Caco-2 (cell line): ENCODE measurements at regions of chr19 and their contacts with region 1.

Region 1: GRCh38 chr19:14031719-14032480 is at the start of gene IL27RA:
- DNase-seq: peak; percentile 63 to 67
- H3K4me3 ChIP-seq: peak within 1 kb of the TSS; percentile 61
- H3K4me3 Mint-ChIP-seq: peak within 1 kb of the TSS; percentile 89
- H3K27ac Mint-ChIP-seq: peak within 1 kb of the TSS; percentile 55
- H3K4me1 ChIP-seq: no peaks in the 10 kb centered on the region
- H3K4me1 Mint-ChIP-seq: peaks cover 6% of the 10 kb centered on the region
- H3K27me3 ChIP-seq: no peaks in the 10 kb centered on the region
- H3K27me3 Mint-ChIP-seq: no peaks in the 10 kb centered on the region
- CTCF ChIP-seq: peak; percentile 69 to 77
- total RNA-seq, gene IL27RA: 4.7 and 5.6 TPM in 2 replicates

Region 2: DNA sequence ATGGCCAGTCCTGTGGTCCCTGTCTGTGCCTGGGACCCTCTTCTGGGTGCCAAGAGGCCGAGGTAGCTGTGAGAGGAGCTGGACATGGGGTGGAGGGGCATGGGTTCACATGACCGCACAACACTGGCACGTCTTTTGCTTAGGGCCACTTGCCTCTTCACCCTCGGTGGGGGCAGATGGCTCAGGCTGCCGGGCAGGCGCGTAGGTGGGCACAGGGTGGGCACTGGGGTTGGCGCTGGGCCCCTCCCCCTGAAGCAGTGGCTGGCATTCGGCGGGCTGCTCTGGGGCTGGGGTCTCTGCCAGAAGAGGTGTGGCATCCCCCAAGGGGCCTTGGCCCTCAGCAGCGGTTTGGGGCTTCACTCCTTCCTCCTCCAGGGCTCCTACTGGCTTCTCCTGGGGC is 21.6 kb after region 1 on chr19:
- CTCF ChIA-PET with region 1: interaction called, 11 read pairs
- POLR2A ChIA-PET with region 1: no interaction called
- intact Hi-C with region 1: no loop called
- DNase-seq: no peak
- H3K4me3 ChIP-seq: no peak overlapping the region
- H3K4me3 Mint-ChIP-seq: no peak overlapping the region
- H3K27ac Mint-ChIP-seq: no peak overlapping the region
- H3K4me1 ChIP-seq: no peaks in the 10 kb centered on the region
- H3K4me1 Mint-ChIP-seq: peaks cover 4% of the 10 kb centered on the region
- H3K27me3 ChIP-seq: no peaks in the 10 kb centered on the region
- H3K27me3 Mint-ChIP-seq: no peaks in the 10 kb centered on the region
- CTCF ChIP-seq: no peak

Region 3: DNA sequence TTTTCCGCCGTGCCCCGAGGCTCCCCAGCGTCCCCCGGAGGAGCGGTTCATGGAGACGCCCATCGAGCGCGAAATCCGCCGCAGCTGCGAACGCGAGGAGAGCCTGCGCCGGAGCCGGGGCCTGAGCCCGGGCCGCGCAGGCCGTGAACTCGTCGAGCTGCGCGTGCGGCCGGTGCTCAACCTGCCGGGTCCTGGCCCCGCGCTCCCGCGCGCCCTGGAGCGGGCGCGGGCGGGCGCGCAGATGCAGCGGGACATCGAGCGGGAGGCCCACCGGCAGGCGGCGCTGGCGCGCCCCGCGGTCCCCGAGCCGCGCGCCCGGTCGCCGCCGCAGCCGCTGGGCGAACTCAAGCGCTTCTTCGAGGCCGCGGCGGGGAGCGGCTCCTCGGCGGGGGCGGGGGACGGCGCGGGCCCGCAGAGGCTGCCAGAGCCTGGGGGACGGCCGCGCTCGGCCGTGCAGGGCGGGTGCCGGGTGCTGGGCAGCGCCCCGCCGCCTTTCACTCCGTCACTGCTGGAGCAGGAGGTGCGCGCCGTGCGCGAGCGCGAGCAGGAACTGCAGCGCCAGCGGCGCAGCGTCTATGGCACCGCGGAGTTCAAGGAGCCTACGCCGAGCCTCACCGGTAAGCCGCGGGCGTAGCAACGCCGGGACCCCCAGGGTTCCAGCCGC is 41.5 kb after region 1 on chr19:
- CTCF ChIA-PET with region 1: interaction called, 7 read pairs
- POLR2A ChIA-PET with region 1: no interaction called
- intact Hi-C with region 1: loop called (anchors 1 kb)
- DNase-seq: peak; percentile 54 to 85
- H3K4me3 ChIP-seq: peak overlapping the region; percentile 84
- H3K4me3 Mint-ChIP-seq: peak overlapping the region; percentile 100
- H3K27ac Mint-ChIP-seq: peak overlapping the region; percentile 97
- H3K4me1 ChIP-seq: no peaks in the 10 kb centered on the region
- H3K4me1 Mint-ChIP-seq: no peaks in the 10 kb centered on the region
- H3K27me3 ChIP-seq: no peaks in the 10 kb centered on the region
- H3K27me3 Mint-ChIP-seq: no peaks in the 10 kb centered on the region
- CTCF ChIP-seq: peak in 1 of 2 experiments; percentile 36

Region 4: DNA sequence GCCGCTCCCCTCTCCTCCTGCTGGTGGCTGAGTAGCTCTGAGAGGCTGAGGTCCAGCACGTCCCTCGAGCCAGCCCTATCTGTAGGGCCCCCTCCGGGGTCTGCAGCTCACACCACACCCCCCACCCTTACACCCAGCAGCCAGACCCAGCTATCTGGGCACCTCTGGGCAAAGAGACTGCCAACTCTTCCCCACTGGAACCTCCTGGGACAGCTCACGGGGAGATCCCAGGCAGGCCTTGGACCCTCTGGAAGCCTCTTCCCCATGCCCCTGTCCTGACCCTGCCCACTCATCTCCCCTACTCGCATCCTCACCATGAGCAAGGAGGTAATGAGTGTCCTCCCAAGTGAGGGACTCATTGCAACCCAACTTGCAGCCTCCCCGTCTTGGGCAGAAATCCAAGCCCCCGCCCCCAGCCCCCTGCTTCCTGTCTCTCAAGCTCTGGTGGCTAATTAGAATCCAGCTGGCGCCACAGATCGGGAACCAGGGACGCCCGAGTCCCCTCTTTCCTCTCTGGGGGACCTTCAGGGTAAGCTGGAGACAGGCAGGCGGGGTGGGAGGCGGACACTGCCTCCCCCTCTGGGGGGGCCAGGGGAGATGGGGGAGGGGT is 151.9 kb after region 1 on chr19:
- CTCF ChIA-PET with region 1: no interaction called
- POLR2A ChIA-PET with region 1: no interaction called
- intact Hi-C with region 1: no loop called
- DNase-seq: no peak
- H3K4me3 ChIP-seq: no peak overlapping the region
- H3K4me3 Mint-ChIP-seq: no peak overlapping the region
- H3K27ac Mint-ChIP-seq: no peak overlapping the region
- H3K4me1 ChIP-seq: no peaks in the 10 kb centered on the region
- H3K4me1 Mint-ChIP-seq: no peaks in the 10 kb centered on the region
- H3K27me3 ChIP-seq: no peaks in the 10 kb centered on the region
- H3K27me3 Mint-ChIP-seq: no peaks in the 10 kb centered on the region
- CTCF ChIP-seq: no peak